ENCODE measurements at regions of chr2 and their contacts with region 1.

Region 1: DNA sequence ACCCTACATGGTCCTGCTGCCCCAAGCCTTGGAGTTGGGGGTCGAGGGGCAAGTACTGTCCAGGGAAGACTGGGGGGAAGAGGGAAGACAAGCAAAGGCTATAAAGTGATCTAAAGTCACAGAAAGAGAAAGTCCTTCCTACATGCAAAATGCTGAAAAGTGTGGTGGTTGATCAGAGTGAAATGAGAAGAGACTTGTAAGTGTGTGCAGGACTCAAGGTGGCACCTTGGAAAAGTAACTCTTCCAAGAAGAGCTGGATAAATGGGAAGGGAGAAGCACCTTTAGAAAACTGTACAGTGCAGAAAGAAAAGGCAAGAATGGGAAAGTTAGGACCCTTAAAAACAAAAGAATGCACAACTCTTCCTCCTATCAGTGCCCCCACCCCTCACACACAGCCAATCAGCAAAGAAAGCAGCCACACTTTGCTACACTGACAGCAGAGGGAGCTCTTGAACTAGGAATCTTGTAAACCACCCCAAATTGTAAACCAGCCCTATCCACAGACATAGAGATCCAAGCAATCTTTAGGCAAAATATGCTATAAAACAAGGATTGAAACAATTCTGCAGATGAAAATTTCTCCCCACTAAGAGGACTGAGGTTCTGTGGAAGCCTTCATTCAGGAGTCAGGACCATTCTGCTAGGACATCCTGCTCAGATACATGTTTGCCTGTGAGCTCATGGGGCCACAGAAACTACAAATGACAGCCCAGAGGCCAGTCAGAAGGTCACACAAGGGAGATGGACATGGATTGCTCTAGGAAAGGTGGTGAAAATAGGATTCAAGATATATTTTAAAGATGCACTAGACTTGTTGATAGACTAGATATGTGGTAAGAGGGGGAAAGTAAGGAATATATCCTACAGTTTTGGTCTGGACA is 146.4 kb downstream of the FTCDNL1 start:
- DNase-seq: no peak
- ATAC-seq: peak; percentile 91
- H3K4me3 ChIP-seq: no peak overlapping the region
- H3K27ac ChIP-seq: no peak overlapping the region
- H3K4me1 ChIP-seq: no peaks in the 10 kb centered on the region
- H3K27me3 ChIP-seq: no peaks in the 10 kb centered on the region
- CTCF ChIP-seq: peak; percentile 75

Region 2: GRCh38 chr2:199197448-199197847 is 507.1 kb before region 1 on chr2:
- CTCF ChIA-PET with region 1: no interaction called
- POLR2A ChIA-PET with region 1: no interaction called
- in situ Hi-C with region 1: no loop called
- intact Hi-C with region 1: no loop called
- DNase-seq: no peak
- ATAC-seq: no peak
- H3K4me3 ChIP-seq: no peak overlapping the region
- H3K27ac ChIP-seq: no peak overlapping the region
- H3K4me1 ChIP-seq: no peaks in the 10 kb centered on the region
- H3K27me3 ChIP-seq: no peaks in the 10 kb centered on the region
- CTCF ChIP-seq: no peak

Region 3: DNA sequence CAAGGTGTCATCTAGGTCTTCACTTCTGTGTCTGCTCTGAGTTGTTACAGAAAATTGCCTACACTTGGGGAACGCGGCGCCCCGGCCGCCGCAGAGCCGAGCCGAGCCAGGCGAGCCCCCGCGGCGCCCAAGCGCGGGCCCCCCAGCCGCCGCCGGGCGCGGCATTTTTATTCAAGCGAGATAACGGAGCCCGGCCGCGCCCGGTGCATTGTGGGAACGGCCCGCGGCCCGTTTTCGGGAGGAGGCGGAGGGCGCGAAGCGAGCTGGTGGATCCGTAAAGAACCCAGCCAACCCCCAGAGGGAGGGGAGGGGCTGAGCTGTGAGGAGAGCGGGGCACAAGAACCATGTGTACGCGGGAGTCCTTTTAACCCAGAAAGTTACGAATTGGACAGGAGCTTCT is 45.4 kb before region 1 on chr2:
- CTCF ChIA-PET with region 1: no interaction called
- POLR2A ChIA-PET with region 1: no interaction called
- in situ Hi-C with region 1: no loop called
- intact Hi-C with region 1: no loop called
- DNase-seq: no peak
- ATAC-seq: peak; percentile 84
- H3K4me3 ChIP-seq: peak overlapping the region; percentile 30 to 46
- H3K27ac ChIP-seq: no peak overlapping the region
- H3K4me1 ChIP-seq: no peaks in the 10 kb centered on the region
- H3K27me3 ChIP-seq: peaks cover 2% of the 10 kb centered on the region
- CTCF ChIP-seq: no peak

Region 4: DNA sequence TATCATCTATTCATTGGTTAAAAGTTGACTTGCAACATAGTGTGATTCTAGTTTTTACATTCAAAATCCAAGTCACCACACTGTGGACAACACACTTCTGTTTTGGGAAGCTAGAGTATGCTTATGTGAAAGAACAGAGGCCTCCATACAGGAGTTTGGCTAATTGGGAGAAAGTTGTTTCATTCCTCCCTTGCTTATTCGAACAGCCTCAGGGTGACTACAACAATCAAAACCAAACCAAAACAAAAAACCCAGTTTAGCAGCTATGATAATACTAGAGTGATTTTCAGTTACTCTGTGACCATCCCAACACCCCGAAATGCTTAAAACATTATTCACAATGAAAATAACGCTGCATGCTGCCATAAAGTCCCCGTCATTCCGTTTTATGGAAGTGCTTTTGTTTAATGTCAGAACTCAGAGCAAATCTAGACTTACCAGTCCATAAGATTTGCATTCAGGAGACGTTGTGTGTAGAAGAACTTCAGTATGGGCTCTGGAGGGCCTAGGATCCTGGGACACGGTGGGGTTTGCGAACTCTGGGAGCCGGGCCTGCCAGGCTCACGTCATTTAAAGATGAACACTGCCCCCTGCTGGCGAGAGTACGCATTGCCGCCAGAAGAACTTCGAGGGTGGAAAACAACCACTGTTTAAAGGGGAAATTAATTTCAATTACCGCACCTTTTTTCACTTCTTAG is 35.0 kb after region 1 on chr2:
- CTCF ChIA-PET with region 1: interaction called, 4 read pairs
- POLR2A ChIA-PET with region 1: no interaction called
- in situ Hi-C with region 1: no loop called
- intact Hi-C with region 1: loop called (anchors 5 kb)
- DNase-seq: peak; percentile 24
- ATAC-seq: peak; percentile 79
- H3K4me3 ChIP-seq: no peak overlapping the region
- H3K27ac ChIP-seq: no peak overlapping the region
- H3K4me1 ChIP-seq: no peaks in the 10 kb centered on the region
- H3K27me3 ChIP-seq: peaks cover 13% of the 10 kb centered on the region
- CTCF ChIP-seq: peak; percentile 90

Region 5: DNA sequence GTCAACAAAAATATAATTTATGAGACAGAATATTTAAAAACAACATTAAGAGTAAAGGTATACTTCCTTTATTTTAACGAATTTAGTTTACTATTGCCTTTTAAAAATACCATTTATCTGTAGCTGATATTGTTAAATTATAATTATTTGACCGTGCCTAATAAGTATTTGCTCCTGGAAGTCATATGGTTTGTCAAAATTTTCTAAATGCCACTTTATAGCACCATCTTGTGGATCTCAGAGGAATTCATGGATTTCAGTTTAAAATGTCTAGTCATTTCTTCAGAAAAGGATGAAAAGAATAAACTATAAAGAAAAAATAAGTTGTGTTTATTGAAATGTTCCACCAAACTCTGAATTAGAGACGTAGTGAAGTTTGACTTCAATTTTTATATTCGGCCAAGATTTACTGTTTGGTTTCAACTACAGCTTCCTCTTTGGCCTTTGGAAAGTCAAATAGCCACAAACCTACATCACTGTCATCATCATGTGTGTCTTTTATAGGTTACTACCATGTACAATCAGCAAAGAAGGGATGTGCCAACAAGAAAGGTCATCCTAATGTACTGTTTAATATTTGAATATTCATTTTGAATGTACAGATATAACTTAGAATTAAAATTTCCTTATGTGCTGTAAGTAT is 156.7 kb after region 1 on chr2:
- CTCF ChIA-PET with region 1: no interaction called
- POLR2A ChIA-PET with region 1: no interaction called
- in situ Hi-C with region 1: no loop called
- intact Hi-C with region 1: loop called (anchors 1 kb)
- DNase-seq: peak; percentile 15
- ATAC-seq: no peak
- H3K4me3 ChIP-seq: no peak overlapping the region
- H3K27ac ChIP-seq: no peak overlapping the region
- H3K4me1 ChIP-seq: no peaks in the 10 kb centered on the region
- H3K27me3 ChIP-seq: peaks cover 6% of the 10 kb centered on the region; the same call in 1 of the 2 replicates
- CTCF ChIP-seq: peak; percentile 66; the same call in 1 of the 2 replicates

Region 6: DNA sequence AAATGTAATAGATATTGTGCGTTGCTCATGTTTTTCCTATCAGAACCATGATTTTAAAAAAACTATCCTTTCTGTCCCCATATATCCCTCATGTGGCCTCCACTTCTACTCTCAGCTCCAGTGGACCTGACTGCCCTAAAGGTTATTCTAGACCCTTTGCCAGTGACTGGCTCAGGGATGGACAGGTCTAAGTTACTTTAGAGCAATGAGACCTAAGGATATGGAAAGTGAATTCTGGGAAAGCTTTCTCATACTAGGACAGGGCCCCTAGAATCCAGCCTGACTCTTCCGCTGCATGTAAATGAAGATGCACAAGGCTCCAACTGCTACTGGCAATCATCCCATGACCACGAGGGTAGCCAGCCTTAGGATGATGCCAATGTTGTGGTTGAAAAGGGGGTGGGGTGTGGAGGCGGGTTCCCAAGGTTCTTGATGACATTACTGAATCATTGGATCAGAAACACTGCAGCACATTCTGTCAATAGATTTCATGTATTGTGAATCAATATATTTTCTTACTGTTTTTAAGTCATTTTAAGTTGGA is 227.8 kb after region 1 on chr2:
- CTCF ChIA-PET with region 1: no interaction called
- POLR2A ChIA-PET with region 1: no interaction called
- in situ Hi-C with region 1: no loop called
- intact Hi-C with region 1: loop called (anchors 10 kb)
- DNase-seq: no peak
- ATAC-seq: no peak
- H3K4me3 ChIP-seq: no peak overlapping the region
- H3K27ac ChIP-seq: no peak overlapping the region
- H3K4me1 ChIP-seq: no peaks in the 10 kb centered on the region; the same call in 1 of the 2 replicates
- H3K27me3 ChIP-seq: no peaks in the 10 kb centered on the region
- CTCF ChIP-seq: no peak